ENCODE measurements at regions of chr20 and their contacts with region 1.

Region 1: GRCh38 chr20:51800060-51800794 is 2.1 kb downstream of the SALL4 start:
- DNase-seq: peak; percentile 98 to 100
- H3K4me3 ChIP-seq: peak overlapping the region; percentile 54
- H3K4me3 Mint-ChIP-seq: peak overlapping the region; percentile 98
- H3K27ac Mint-ChIP-seq: peak overlapping the region; percentile 96
- H3K4me1 ChIP-seq: peaks cover 77% of the 10 kb centered on the region
- H3K4me1 Mint-ChIP-seq: peaks cover 78% of the 10 kb centered on the region
- H3K27me3 ChIP-seq: no peaks in the 10 kb centered on the region
- H3K27me3 Mint-ChIP-seq: no peaks in the 10 kb centered on the region
- CTCF ChIP-seq: peak; percentile 100

Region 2: GRCh38 chr20:51372176-51372803 is 427.9 kb before region 1 on chr20:
- CTCF ChIA-PET with region 1: no interaction called
- POLR2A ChIA-PET with region 1: no interaction called
- intact Hi-C with region 1: loop called (anchors 5 kb)
- DNase-seq: peak; percentile 88 to 92
- H3K4me3 ChIP-seq: no peak overlapping the region
- H3K4me3 Mint-ChIP-seq: no peak overlapping the region
- H3K27ac Mint-ChIP-seq: no peak overlapping the region
- H3K4me1 ChIP-seq: peaks cover 14% of the 10 kb centered on the region
- H3K4me1 Mint-ChIP-seq: peaks cover 12% of the 10 kb centered on the region
- H3K27me3 ChIP-seq: no peaks in the 10 kb centered on the region
- H3K27me3 Mint-ChIP-seq: peaks cover 6% of the 10 kb centered on the region
- CTCF ChIP-seq: peak; percentile 99

Region 3: DNA sequence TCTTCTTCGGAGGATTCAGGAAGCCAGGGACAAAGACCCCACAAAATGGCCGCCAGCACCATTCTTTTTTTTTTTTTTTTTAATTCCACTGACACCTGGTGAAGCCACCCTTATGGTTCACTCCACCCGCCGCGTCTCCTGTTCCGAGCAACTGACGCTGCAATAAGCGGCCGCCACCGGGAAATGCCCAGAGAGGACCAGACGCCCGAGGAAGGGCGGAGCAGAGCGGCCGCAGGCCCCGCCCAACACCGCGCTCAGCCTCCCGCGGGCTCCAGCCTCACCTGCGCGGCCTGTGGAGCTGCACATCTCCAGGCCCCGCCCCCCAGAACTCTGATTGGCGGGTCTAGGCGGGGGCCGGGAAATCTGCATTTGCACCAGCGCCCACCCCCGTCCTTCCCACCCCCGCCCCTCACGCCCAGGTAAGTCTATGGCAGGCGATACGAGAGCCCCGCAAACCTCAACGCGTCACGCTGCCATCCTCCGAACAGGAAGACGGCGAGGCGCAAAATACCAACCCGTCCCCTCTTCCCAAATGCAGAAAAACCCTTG is 33.1 kb before region 1 on chr20:
- CTCF ChIA-PET with region 1: interaction called, 20 read pairs
- POLR2A ChIA-PET with region 1: interaction called, 8 read pairs
- intact Hi-C with region 1: loop called (anchors 1 kb)
- DNase-seq: peak; percentile 99
- H3K4me3 ChIP-seq: peak overlapping the region; percentile 95
- H3K4me3 Mint-ChIP-seq: peak overlapping the region; percentile 84
- H3K27ac Mint-ChIP-seq: peak overlapping the region; percentile 80
- H3K4me1 ChIP-seq: peaks cover 15% of the 10 kb centered on the region
- H3K4me1 Mint-ChIP-seq: peaks cover 17% of the 10 kb centered on the region
- H3K27me3 ChIP-seq: no peaks in the 10 kb centered on the region
- H3K27me3 Mint-ChIP-seq: no peaks in the 10 kb centered on the region
- CTCF ChIP-seq: no peak

Region 4: DNA sequence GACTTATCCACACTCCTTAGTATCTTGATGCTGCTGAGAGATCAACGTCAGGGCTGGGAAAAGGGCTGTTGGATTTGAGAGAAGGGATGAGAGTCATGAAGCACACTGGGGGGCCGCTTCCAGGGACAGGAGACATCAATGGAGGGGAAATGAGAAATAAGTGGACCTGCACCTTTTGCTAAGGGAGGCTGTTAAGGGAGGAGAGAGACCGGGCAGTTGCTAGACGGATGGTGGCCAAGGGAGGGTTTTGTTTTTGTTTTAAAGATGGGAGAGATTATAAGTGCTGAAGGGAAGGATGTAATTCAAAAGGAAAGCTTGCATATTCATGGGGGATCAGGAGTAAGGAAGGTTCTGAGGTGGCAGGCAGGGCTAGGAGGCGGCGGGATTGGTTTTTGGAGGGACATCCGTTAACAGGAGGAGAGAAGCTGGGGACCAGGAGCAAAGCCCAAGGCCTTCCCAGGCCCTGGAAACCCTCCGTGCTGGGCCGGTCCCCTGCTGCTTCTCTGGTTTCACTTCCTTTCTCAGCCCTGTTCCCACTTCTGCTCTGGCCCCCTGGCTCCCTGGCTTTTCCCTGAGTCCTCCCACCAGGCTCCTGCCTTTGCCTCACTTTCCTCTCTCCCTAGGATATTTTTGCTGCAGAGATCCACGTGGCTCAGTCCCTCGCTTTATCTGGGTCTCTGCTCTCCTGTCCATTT is 28.4 kb after region 1 on chr20:
- CTCF ChIA-PET with region 1: no interaction called
- POLR2A ChIA-PET with region 1: no interaction called
- intact Hi-C with region 1: no loop called
- DNase-seq: no peak
- H3K4me3 ChIP-seq: no peak overlapping the region
- H3K4me3 Mint-ChIP-seq: no peak overlapping the region
- H3K27ac Mint-ChIP-seq: peak overlapping the region; percentile 21
- H3K4me1 ChIP-seq: no peaks in the 10 kb centered on the region; the same call in 1 of the 2 replicates
- H3K4me1 Mint-ChIP-seq: peaks cover 12% of the 10 kb centered on the region
- H3K27me3 ChIP-seq: no peaks in the 10 kb centered on the region; the same call in 1 of the 2 replicates
- H3K27me3 Mint-ChIP-seq: no peaks in the 10 kb centered on the region
- CTCF ChIP-seq: no peak

Region 5: DNA sequence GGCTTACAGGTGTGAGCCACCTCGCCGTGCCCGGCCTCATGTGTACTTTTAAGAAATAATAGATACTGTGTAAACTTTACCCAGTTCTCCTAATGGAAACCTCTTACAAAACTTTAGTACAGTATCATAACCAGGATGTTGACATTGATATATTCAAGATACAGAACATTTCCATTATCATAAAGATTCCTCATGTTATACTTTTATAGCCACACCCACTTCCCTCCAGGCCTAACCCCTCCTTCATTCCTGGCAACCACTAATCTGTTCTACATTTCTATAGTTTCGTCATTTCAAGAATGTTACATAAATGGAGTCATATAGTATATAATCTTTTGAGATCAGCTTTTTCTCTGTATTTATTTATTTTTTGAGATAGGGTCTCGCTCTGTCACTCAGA is 54.7 kb after region 1 on chr20:
- CTCF ChIA-PET with region 1: interaction called, 10 read pairs
- POLR2A ChIA-PET with region 1: no interaction called
- intact Hi-C with region 1: loop called (anchors 5 kb)
- DNase-seq: no peak
- H3K4me3 ChIP-seq: no peak overlapping the region
- H3K4me3 Mint-ChIP-seq: no peak overlapping the region
- H3K27ac Mint-ChIP-seq: no peak overlapping the region
- H3K4me1 ChIP-seq: peaks cover 30% of the 10 kb centered on the region
- H3K4me1 Mint-ChIP-seq: peaks cover 24% of the 10 kb centered on the region
- H3K27me3 ChIP-seq: no peaks in the 10 kb centered on the region
- H3K27me3 Mint-ChIP-seq: no peaks in the 10 kb centered on the region
- CTCF ChIP-seq: no peak

Region 6: DNA sequence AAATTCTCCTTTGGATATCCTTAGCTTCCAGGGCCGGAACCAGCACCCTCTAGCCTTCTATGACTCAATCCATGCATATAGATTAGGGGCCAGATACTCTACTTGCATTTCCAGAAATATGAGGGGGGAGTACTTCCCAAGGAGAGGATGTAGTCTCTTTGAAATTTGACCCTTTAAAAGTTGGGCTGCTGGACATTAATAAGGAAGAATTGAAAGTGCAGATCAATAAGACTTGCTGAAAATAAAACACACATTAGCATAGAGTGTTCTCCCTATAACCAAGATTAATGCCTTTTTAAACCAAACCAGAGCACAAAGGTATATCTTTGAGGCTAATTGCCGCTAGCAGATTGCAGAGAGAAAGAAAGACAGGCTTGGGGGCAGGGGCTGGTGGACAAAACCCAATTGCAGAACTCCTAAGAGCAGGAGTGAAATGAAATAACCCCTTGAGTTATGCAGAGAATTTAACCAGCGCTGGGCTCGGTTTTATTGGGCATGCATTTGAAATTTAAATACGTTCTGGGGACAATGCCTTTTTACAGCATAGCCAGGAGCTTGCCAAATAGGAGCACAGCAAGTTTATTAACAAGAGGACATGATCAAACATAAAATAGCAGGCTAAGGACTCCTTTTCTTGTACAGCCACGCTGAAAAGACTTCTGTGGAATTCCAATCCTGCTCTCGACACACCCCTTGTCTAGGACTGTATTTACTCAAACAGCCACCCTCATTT is 110.3 kb after region 1 on chr20:
- CTCF ChIA-PET with region 1: interaction called, 13 read pairs
- POLR2A ChIA-PET with region 1: interaction called, 4 read pairs
- intact Hi-C with region 1: loop called (anchors 1 kb)
- DNase-seq: peak; percentile 78 to 80
- H3K4me3 ChIP-seq: 0 out of 2 replicates have a peak overlapping the region, but pooled peaks have one; percentile 6
- H3K4me3 Mint-ChIP-seq: peak overlapping the region; percentile 68
- H3K27ac Mint-ChIP-seq: peak overlapping the region; percentile 82
- H3K4me1 ChIP-seq: peaks cover 39% of the 10 kb centered on the region
- H3K4me1 Mint-ChIP-seq: peaks cover 47% of the 10 kb centered on the region
- H3K27me3 ChIP-seq: no peaks in the 10 kb centered on the region
- H3K27me3 Mint-ChIP-seq: no peaks in the 10 kb centered on the region
- CTCF ChIP-seq: no peak

Region 7: DNA sequence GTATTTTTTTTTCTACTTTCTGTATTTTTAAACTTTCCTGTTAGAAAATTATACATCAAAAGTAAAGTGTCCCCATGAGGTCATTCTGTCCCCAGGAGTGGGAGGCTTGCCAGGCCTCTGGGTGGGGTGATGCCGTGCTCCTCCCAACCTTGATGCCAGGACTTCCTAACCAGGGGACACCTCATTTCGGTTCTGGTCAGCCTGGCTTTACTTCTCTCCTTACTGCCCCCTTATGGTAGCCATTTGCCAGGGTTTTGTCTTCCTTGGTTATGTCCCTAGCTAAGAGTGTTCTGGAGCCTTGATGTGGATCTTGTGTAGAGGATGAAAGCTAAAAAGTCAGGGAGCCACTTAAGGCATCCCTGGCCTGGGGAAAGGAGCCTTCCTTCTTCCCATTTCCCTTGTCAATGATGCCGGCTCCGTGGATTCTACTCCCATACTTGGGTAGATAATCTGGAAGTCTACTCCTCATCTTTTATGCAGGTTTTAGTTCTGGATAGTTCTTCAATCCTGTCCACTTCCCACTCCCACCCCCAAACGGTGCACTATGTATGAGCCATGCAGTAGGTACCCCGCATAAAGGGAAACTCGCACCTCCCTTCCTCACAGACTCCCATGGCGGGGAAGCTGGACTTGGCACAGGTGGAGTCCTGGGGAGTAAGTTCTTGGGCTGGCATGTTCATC is 166.2 kb after region 1 on chr20:
- CTCF ChIA-PET with region 1: interaction called, 18 read pairs
- POLR2A ChIA-PET with region 1: interaction called, 5 read pairs
- intact Hi-C with region 1: loop called (anchors 1 kb)
- DNase-seq: peak; percentile 87
- H3K4me3 ChIP-seq: no peak overlapping the region
- H3K4me3 Mint-ChIP-seq: no peak overlapping the region
- H3K27ac Mint-ChIP-seq: no peak overlapping the region
- H3K4me1 ChIP-seq: peaks cover 6% of the 10 kb centered on the region; the same call in 1 of the 2 replicates
- H3K4me1 Mint-ChIP-seq: peaks cover 11% of the 10 kb centered on the region
- H3K27me3 ChIP-seq: no peaks in the 10 kb centered on the region
- H3K27me3 Mint-ChIP-seq: no peaks in the 10 kb centered on the region
- CTCF ChIP-seq: peak; percentile 86 to 88

Region 8: DNA sequence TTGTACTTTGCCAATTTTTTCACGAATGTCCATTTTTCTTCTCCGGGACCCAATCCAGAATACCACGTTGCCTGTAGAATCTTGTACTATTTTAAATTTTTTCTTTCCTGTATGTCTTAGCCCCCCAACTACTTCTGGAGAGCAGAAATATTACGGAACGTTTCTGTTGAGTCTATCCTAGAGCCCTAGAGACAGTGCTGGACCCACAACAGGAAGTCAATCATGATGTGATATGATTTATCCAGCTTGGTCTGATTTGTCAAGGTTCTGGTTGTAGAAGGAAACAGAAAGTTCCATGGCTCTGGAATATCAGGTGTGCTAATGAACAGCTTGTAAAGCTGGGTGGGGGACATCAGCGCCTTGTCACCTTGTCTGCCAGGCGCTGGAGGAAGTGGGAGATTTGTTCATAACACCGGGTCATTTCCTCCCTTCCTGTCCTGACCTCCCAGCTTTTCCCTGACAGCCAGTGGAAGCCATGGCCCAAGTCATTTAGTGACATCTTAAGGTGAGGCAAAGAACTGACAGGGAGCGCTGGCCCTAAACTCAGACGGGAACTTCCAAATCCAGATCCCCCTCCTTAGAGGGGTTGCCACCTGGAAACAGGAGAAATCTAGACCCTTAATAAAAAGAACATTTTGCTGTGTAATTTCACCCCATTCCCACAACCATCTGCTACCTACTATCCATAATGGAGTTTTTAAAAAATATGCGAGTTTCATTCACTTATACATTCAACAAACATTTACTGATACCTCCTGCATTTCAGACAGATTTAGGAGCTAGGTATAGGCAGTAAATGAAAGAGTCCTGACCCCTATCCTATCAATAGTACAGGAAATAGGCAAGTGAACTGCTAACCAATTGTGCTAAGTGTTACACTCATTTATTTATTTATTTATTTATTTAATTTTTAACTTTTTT is 260.8 kb after region 1 on chr20:
- CTCF ChIA-PET with region 1: interaction called, 39 read pairs
- POLR2A ChIA-PET with region 1: interaction called, 5 read pairs
- intact Hi-C with region 1: loop called (anchors 1 kb)
- DNase-seq: peak; percentile 83 to 86
- H3K4me3 ChIP-seq: no peak overlapping the region
- H3K4me3 Mint-ChIP-seq: no peak overlapping the region
- H3K27ac Mint-ChIP-seq: peak overlapping the region; percentile 12
- H3K4me1 ChIP-seq: peaks cover 8% of the 10 kb centered on the region; the same call in 1 of the 2 replicates
- H3K4me1 Mint-ChIP-seq: peaks cover 8% of the 10 kb centered on the region
- H3K27me3 ChIP-seq: no peaks in the 10 kb centered on the region
- H3K27me3 Mint-ChIP-seq: no peaks in the 10 kb centered on the region
- CTCF ChIP-seq: peak; percentile 95 to 98